ENCODE measurements at regions of chr5 and their contacts with region 1.

Region 1: GRCh38 chr5:141849375-141850243 is 28.6 kb downstream of the PCDH1 start:
- DNase-seq: peak; percentile 58 to 93
- H3K4me3 ChIP-seq: peak overlapping the region; percentile 47 to 78 (median 70)
- H3K27ac ChIP-seq: peak overlapping the region; percentile 99
- H3K4me1 ChIP-seq: peaks cover 27 to 57% (median 46%) of the 10 kb centered on the region in 4 experiments
- H3K27me3 ChIP-seq: no peaks in the 10 kb centered on the region
- CTCF ChIP-seq: no peak
- EP300 ChIP-seq: peak in 1 of 2 experiments; percentile 82; a peak in 1 of 3 replicates
- POLR2A ChIP-seq: peak in 1 of 2 experiments; percentile 74; a peak in 2 of 3 replicates
- RAD21 ChIP-seq: no peak; a peak in 1 of 4 replicates

Region 2: DNA sequence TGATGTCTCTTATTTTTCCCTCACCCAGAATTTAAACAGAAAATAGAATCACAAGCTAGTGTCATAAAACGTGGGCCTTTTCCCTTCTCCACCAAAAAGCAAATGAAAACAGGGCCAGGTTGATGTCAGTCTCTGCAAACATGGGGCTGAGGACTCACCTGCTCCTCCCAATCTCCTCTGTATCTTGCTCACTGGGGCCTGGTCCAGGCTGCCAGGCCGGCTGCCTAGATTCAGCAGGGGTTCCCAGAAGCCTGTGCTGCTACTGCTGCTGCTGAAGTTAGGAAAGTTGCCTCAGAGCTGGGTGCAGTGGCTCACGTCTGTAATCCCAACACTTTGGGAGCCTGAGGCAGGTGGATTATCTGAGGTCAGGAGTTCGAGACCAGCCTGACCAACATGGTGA is 55.7 kb before region 1 on chr5:
- CTCF ChIA-PET with region 1: interaction called, 12 read pairs
- POLR2A ChIA-PET with region 1: no interaction called
- DNase-seq: no peak
- H3K4me3 ChIP-seq: no peak overlapping the region
- H3K27ac ChIP-seq: no peak overlapping the region
- H3K4me1 ChIP-seq: peaks cover 0 to 9% (median 2%) of the 10 kb centered on the region in 4 experiments; a peak in 2 of 7 replicates
- H3K27me3 ChIP-seq: no peaks in the 10 kb centered on the region
- CTCF ChIP-seq: no peak
- EP300 ChIP-seq: no peak
- POLR2A ChIP-seq: no peak
- RAD21 ChIP-seq: no peak

Region 3: DNA sequence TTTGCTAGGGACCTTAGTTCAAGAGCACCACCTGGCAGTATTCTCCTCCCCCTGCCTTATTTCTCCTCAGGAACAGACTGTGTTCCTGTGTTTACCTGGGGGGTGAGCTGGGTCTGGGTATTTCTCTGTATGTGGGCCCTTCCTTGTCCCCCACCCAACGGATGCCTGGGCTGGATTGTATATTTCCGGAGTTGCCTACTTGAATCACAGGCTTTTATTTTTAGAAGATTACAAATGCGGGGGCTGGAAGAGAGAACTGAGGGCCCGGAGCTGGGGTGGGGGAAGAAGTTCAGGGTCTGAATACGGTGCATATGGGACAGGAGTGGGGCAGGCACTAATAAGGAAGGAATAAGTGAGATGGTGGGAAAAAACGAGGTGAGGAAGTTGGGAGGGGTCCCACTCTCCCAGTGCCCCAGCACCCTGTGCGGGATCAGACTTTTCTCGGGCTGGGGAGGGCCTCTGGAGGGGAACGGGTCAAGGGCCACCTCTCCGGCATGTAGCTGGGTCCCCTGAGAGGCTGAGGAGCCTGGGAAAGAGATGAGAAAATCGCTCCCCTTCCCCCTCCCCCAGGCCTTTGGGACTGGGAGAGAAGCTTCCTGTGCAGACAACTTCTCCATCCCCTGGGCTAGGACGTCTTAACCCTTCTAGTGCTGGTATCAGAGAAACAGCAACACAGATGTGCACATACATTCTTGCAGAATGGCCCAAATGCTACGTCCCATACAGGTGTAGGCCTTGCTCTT is 13.5 kb before region 1 on chr5:
- CTCF ChIA-PET with region 1: interaction called, 32 read pairs
- POLR2A ChIA-PET with region 1: interaction called, 26 read pairs
- DNase-seq: no peak
- H3K4me3 ChIP-seq: no peak overlapping the region
- H3K27ac ChIP-seq: 0 out of 2 replicates have a peak overlapping the region, but pooled peaks have one; percentile 14
- H3K4me1 ChIP-seq: peaks cover 31 to 46% (median 43%) of the 10 kb centered on the region in 4 experiments
- H3K27me3 ChIP-seq: no peaks in the 10 kb centered on the region
- CTCF ChIP-seq: no peak
- EP300 ChIP-seq: no peak
- POLR2A ChIP-seq: no peak
- RAD21 ChIP-seq: no peak

Region 4: GRCh38 chr5:141866149-141867120 is 16.8 kb after region 1 on chr5:
- CTCF ChIA-PET with region 1: interaction called, 11 read pairs
- POLR2A ChIA-PET with region 1: interaction called, 210 read pairs
- DNase-seq: no peak
- H3K4me3 ChIP-seq: no peak overlapping the region
- H3K27ac ChIP-seq: no peak overlapping the region
- H3K4me1 ChIP-seq: peaks cover 14 to 21% (median 15%) of the 10 kb centered on the region in 4 experiments
- H3K27me3 ChIP-seq: no peaks in the 10 kb centered on the region
- CTCF ChIP-seq: no peak
- EP300 ChIP-seq: no peak
- POLR2A ChIP-seq: no peak
- RAD21 ChIP-seq: no peak

Region 5: DNA sequence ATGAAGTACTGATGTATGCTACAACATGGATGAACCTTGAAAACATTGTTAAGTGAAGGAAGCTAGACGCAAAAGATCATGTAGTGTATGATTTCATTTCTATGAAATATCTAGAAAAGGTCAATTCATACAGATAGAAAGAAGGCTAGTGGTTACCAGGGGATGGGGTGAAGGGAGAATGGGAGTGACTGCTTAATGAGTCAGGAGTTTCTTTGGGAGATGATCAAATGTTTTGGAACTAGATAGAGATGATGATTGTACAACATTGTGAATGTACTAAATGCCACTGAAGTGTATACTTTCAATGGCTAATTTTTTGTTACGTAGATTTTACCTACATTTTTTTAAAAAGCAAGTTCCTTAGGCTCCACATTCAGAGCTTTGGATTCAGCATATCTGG is 59.2 kb after region 1 on chr5:
- CTCF ChIA-PET with region 1: no interaction called
- POLR2A ChIA-PET with region 1: no interaction called
- DNase-seq: no peak
- H3K4me3 ChIP-seq: no peak overlapping the region
- H3K27ac ChIP-seq: no peak overlapping the region
- H3K4me1 ChIP-seq: peaks cover 3 to 6% (median 4%) of the 10 kb centered on the region in 4 experiments; a peak in 6 of 7 replicates
- H3K27me3 ChIP-seq: peaks cover 0 to 11% (median 5%) of the 10 kb centered on the region in 4 experiments; a peak in 5 of 7 replicates
- CTCF ChIP-seq: no peak
- EP300 ChIP-seq: no peak
- POLR2A ChIP-seq: no peak
- RAD21 ChIP-seq: no peak

Region 6: GRCh38 chr5:141923448-141924352 is 74.1 kb after region 1 on chr5 and contains the start of gene DELE1:
- CTCF ChIA-PET with region 1: no interaction called
- POLR2A ChIA-PET with region 1: no interaction called
- DNase-seq: peak; percentile 69 to 90
- H3K4me3 ChIP-seq: peak within 1 kb of the TSS; percentile 68 to 84 (median 74)
- H3K27ac ChIP-seq: peak within 1 kb of the TSS; percentile 71; the same call in 1 of the 2 replicates
- H3K4me1 ChIP-seq: peaks cover 0 to 3% (median 3%) of the 10 kb centered on the region in 4 experiments; a peak in 3 of 7 replicates
- H3K27me3 ChIP-seq: no peaks in the 10 kb centered on the region
- CTCF ChIP-seq: peak in 1 of 3 experiments; percentile 5; a peak in 1 of 4 replicates
- EP300 ChIP-seq: no peak
- POLR2A ChIP-seq: peak in 1 of 2 experiments; percentile 84; a peak in 2 of 3 replicates
- RAD21 ChIP-seq: peak in 1 of 2 experiments; percentile 9; a peak in 1 of 4 replicates
- total RNA-seq, gene DELE1: 59.6 and 61.4 TPM in 2 replicates

Measured in H1 (cell line).